Activated CD4-positive, alpha-beta T cell treated with anti-CD3 and anti-CD28 coated beads for 36 hours (primary cell): ENCODE measurements at regions of chr11 and their contacts with region 1.

Region 1: DNA sequence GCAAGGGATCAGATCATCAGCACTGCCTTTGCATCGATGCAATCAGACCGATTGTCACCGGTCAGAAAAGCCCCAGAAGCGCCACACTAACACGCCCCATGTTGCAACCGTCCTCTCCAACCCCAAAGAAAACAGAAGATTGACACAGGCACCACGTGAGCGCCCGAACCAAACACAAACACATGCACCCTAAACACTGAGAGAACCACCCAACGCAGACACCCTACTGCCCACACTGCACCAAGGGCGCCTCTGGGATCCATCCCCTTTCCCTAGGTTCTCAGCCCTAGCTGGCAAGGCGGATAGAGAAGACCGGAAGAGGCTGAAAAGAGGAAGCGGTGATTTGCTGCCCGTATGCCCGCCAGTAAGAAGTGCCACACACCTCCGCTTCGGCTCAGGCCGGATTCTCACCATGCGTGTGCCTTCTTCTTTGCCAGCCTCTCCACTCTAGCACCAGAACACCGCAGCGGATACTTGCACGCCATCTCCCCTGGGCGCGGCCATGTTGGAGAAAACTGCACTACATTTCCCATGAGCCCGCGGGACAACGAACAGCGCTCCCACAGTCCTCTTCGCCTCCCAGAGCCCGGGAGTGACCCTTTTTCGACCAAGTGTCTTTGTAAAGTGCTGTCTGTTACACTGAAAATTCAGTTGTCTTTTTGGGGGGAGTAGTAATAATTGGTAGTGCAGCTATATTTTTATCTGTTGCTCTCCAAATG is at the start of gene ALKBH8:
- DNase-seq: peak; percentile 90
- ATAC-seq: peak; percentile 92
- H3K4me3 Mint-ChIP-seq: peak within 1 kb of the TSS; percentile 93
- H3K27ac Mint-ChIP-seq: peak within 1 kb of the TSS; percentile 98
- H3K4me1 Mint-ChIP-seq: peaks cover 54% of the 10 kb centered on the region
- H3K27me3 Mint-ChIP-seq: no peaks in the 10 kb centered on the region
- total RNA-seq, gene ALKBH8: 11.4 to 12.6 TPM

Region 2: GRCh38 chr11:106076919-106077608 is 1488.3 kb before region 1 on chr11 and contains the start of gene KBTBD3:
- CTCF ChIA-PET with region 1: no interaction called
- POLR2A ChIA-PET with region 1: no interaction called
- intact Hi-C with region 1: loop called in 1 of 2 experiments (anchors 1 kb)
- DNase-seq: peak; percentile 99
- ATAC-seq: peak; percentile 97
- H3K4me3 Mint-ChIP-seq: peak within 1 kb of the TSS; percentile 87
- H3K27ac Mint-ChIP-seq: peak within 1 kb of the TSS; percentile 91
- H3K4me1 Mint-ChIP-seq: peaks cover 45% of the 10 kb centered on the region
- H3K27me3 Mint-ChIP-seq: no peaks in the 10 kb centered on the region
- total RNA-seq, gene KBTBD3: 8.9 to 9.1 TPM

Region 3: DNA sequence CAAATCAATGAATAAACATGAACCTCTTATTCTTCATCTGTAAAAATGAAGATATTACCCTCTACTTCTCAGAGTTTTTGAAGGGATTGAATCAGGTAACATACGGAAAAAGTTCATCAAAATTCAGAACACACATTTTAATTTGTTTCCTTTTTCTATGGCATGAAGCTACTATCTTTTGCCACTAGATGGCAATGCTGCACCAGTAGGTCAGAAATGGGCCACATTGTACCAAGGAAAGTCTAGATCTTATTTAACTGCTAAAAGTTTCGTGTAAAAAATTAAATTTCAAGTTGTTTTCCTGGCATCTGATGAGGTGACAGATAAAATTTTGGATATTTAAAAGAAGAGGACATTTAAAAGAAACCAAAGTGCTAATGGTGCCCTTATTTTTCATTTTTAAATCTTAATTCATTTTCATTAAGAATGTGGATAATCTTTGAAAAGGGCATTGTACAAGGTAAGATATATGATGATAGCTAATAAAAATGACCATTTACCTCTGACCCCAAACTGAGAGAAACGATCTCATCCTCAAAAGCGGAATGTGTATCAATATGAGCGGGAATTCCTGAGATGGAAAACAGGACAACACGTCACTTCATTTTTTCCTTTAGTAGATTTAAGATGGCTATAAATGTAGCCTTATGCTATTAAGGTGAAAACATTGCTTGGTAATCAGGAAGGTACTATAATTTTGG is 16.0 kb before region 1 on chr11:
- CTCF ChIA-PET with region 1: interaction called, 22 read pairs
- POLR2A ChIA-PET with region 1: no interaction called
- intact Hi-C with region 1: no loop called
- DNase-seq: peak; percentile 45
- ATAC-seq: peak; percentile 65
- H3K4me3 Mint-ChIP-seq: no peak overlapping the region
- H3K27ac Mint-ChIP-seq: no peak overlapping the region
- H3K4me1 Mint-ChIP-seq: peaks cover 11% of the 10 kb centered on the region
- H3K27me3 Mint-ChIP-seq: no peaks in the 10 kb centered on the region

Region 4: GRCh38 chr11:107689317-107690202 is 124.2 kb after region 1 on chr11:
- CTCF ChIA-PET with region 1: interaction called, 49 read pairs
- POLR2A ChIA-PET with region 1: interaction called, 3 read pairs
- intact Hi-C with region 1: loop called (anchors 1 kb)
- DNase-seq: peak; percentile 77
- ATAC-seq: peak; percentile 73
- H3K4me3 Mint-ChIP-seq: no peak overlapping the region
- H3K27ac Mint-ChIP-seq: no peak overlapping the region
- H3K4me1 Mint-ChIP-seq: no peaks in the 10 kb centered on the region
- H3K27me3 Mint-ChIP-seq: peaks cover 6% of the 10 kb centered on the region

Region 5: DNA sequence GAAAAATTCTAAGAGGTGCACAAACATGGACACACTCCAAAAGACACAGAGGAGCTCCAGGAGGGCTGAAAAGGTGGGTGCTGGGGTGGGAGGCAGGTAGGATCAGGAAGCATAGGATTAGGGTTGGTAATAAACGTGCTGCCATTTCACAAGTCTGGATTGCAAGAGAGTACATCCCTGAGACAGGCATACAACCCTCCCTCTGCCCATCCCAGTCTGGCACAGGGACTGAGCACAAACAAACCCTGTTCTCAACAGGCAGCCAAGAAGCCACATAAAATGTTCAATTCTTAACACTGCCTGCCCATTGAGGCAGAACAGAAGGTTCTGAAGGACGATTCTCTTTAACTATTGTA is 274.7 kb after region 1 on chr11:
- CTCF ChIA-PET with region 1: no interaction called
- POLR2A ChIA-PET with region 1: no interaction called
- intact Hi-C with region 1: loop called in 1 of 2 experiments (anchors 2 kb)
- DNase-seq: no peak
- ATAC-seq: peak; percentile 4
- H3K4me3 Mint-ChIP-seq: peak overlapping the region; percentile 23
- H3K27ac Mint-ChIP-seq: peak overlapping the region; percentile 96
- H3K4me1 Mint-ChIP-seq: peaks cover 71% of the 10 kb centered on the region
- H3K27me3 Mint-ChIP-seq: no peaks in the 10 kb centered on the region

Region 6: GRCh38 chr11:108121274-108122155 is 556.1 kb after region 1 on chr11 and contains the start of gene ACAT1:
- CTCF ChIA-PET with region 1: no interaction called
- POLR2A ChIA-PET with region 1: no interaction called
- intact Hi-C with region 1: loop called in 1 of 2 experiments (anchors 1 kb)
- DNase-seq: peak; percentile 98
- ATAC-seq: peak; percentile 96
- H3K4me3 Mint-ChIP-seq: peak within 1 kb of the TSS; percentile 87
- H3K27ac Mint-ChIP-seq: peak within 1 kb of the TSS; percentile 85
- H3K4me1 Mint-ChIP-seq: peaks cover 40% of the 10 kb centered on the region
- H3K27me3 Mint-ChIP-seq: no peaks in the 10 kb centered on the region
- total RNA-seq, gene ACAT1: 59.0 to 67.0 TPM

Region 7: GRCh38 chr11:108593214-108593922 is 1028.0 kb after region 1 on chr11 and contains the start of gene EXPH5:
- CTCF ChIA-PET with region 1: no interaction called
- POLR2A ChIA-PET with region 1: no interaction called
- intact Hi-C with region 1: loop called in 1 of 2 experiments (anchors 10 kb)
- DNase-seq: peak; percentile 92
- ATAC-seq: peak; percentile 99
- H3K4me3 Mint-ChIP-seq: peak within 1 kb of the TSS; percentile 94
- H3K27ac Mint-ChIP-seq: peak within 1 kb of the TSS; percentile 98
- H3K4me1 Mint-ChIP-seq: peaks cover 15% of the 10 kb centered on the region
- H3K27me3 Mint-ChIP-seq: peaks cover 21% of the 10 kb centered on the region
- total RNA-seq, gene EXPH5: 2.0 to 2.4 TPM